ENCODE measurements at regions of chr11 and their contacts with region 1.

Region 1: GRCh38 chr11:131674051-131674755 is 303.8 kb downstream of the NTM start:
- DNase-seq: peak; percentile 62
- H3K4me3 ChIP-seq: no peak overlapping the region
- H3K27ac ChIP-seq: no peak overlapping the region
- H3K4me1 ChIP-seq: no peaks in the 10 kb centered on the region
- H3K27me3 ChIP-seq: peaks cover 0 to 4% of the 10 kb centered on the region in 2 experiments
- CTCF ChIP-seq: peak; percentile 94 to 96
- POLR2A ChIP-seq: no peak

Region 2: GRCh38 chr11:130916238-130916855 is 757.9 kb before region 1 on chr11 and contains the start of gene SNX19:
- CTCF ChIA-PET with region 1: interaction called, 16 read pairs
- POLR2A ChIA-PET with region 1: no interaction called
- dilution Hi-C with region 1: no loop called
- intact Hi-C with region 1: no loop called
- DNase-seq: peak; percentile 92
- H3K4me3 ChIP-seq: peak within 1 kb of the TSS; percentile 34 to 87 (median 51)
- H3K27ac ChIP-seq: peak within 1 kb of the TSS; percentile 76
- H3K4me1 ChIP-seq: peaks cover 12% of the 10 kb centered on the region
- H3K27me3 ChIP-seq: peaks cover 3 to 4% of the 10 kb centered on the region in 2 experiments
- CTCF ChIP-seq: peak; percentile 91 to 97
- POLR2A ChIP-seq: peak; percentile 89
- total RNA-seq, gene SNX19: 44.3 and 49.8 TPM in 2 replicates

Region 3: DNA sequence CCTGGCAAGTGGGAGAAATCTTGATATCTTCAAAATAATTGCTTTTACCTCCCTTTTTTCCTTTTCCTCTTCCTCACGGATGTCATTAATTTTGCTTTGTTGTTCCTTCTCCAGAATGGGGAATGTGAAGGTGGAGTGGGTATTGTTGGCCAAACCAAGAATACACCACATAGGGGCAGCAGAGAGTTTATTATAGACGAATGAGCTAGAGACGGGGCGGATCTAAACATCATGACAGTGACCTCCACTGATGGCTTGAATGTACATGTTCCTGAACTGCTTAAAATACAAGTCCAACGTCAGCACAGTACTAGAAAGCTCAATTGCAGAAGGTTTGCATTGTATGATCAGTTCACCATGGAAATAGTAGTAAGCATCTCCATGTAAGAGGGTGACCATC is 635.6 kb before region 1 on chr11:
- CTCF ChIA-PET with region 1: interaction called, 7 read pairs
- POLR2A ChIA-PET with region 1: no interaction called
- dilution Hi-C with region 1: no loop called
- intact Hi-C with region 1: loop called (anchors 10 kb)
- DNase-seq: no peak
- H3K4me3 ChIP-seq: no peak overlapping the region
- H3K27ac ChIP-seq: no peak overlapping the region
- H3K4me1 ChIP-seq: peaks cover 3% of the 10 kb centered on the region
- H3K27me3 ChIP-seq: peaks cover 0 to 1% of the 10 kb centered on the region in 2 experiments
- CTCF ChIP-seq: peak in 1 of 2 donors; percentile 9
- POLR2A ChIP-seq: no peak

Region 4: DNA sequence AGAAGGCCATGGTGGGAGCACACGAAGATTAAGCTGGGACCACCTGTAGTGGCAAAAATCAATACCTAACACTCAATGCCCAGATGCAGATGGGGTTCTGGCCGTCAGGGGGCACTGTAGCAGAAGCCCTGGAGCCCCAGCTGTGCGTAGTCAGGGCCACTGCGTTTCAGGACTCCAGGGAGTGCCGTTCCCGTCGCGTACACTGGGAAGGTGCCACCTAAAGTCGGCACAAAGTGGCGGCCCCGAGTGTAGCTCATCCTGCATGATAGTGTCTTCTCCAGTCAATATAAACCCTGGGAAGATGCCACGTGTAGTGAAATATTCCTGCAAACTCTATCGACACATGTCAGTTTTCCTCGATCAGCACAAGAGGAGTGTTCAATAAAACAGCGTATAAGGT is 427.5 kb before region 1 on chr11:
- CTCF ChIA-PET with region 1: no interaction called
- POLR2A ChIA-PET with region 1: no interaction called
- dilution Hi-C with region 1: no loop called
- intact Hi-C with region 1: loop called (anchors 5 kb)
- DNase-seq: no peak
- H3K4me3 ChIP-seq: no peak overlapping the region
- H3K27ac ChIP-seq: no peak overlapping the region
- H3K4me1 ChIP-seq: no peaks in the 10 kb centered on the region
- H3K27me3 ChIP-seq: no peaks in the 10 kb centered on the region
- CTCF ChIP-seq: no peak
- POLR2A ChIP-seq: no peak

Region 5: DNA sequence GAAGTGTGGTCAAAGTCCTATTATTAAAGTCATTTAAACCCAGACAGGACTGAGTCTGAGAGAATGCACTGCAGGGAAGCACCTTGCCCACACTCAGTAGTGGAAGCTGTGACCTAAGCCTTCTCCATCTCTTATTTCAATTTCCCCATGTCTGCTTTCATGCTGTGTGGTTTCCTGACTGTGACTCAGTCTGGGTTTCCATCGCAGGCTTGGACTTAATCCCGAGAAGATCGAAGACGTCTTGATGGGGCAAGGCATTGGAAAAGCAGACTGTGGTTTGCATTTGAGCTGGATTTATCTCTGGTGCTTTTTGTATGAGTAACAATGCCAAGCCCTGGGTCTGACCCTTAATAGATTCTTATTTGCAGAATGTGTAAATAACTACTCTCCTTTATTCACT is 64.9 kb before region 1 on chr11:
- CTCF ChIA-PET with region 1: no interaction called
- POLR2A ChIA-PET with region 1: no interaction called
- dilution Hi-C with region 1: no loop called
- intact Hi-C with region 1: no loop called
- DNase-seq: no peak
- H3K4me3 ChIP-seq: no peak overlapping the region
- H3K27ac ChIP-seq: no peak overlapping the region
- H3K4me1 ChIP-seq: no peaks in the 10 kb centered on the region
- H3K27me3 ChIP-seq: no peaks in the 10 kb centered on the region
- CTCF ChIP-seq: no peak
- POLR2A ChIP-seq: no peak

Region 6: GRCh38 chr11:131662317-131662972 is 11.8 kb before region 1 on chr11:
- CTCF ChIA-PET with region 1: interaction called, 19 read pairs
- POLR2A ChIA-PET with region 1: no interaction called
- dilution Hi-C with region 1: no loop called
- intact Hi-C with region 1: no loop called
- DNase-seq: no peak
- H3K4me3 ChIP-seq: no peak overlapping the region
- H3K27ac ChIP-seq: no peak overlapping the region
- H3K4me1 ChIP-seq: no peaks in the 10 kb centered on the region
- H3K27me3 ChIP-seq: peaks cover 2 to 3% of the 10 kb centered on the region in 2 experiments
- CTCF ChIP-seq: no peak
- POLR2A ChIP-seq: no peak

Region 7: GRCh38 chr11:131710511-131710910 is 36.3 kb after region 1 on chr11:
- CTCF ChIA-PET with region 1: no interaction called
- POLR2A ChIA-PET with region 1: no interaction called
- dilution Hi-C with region 1: no loop called
- intact Hi-C with region 1: no loop called
- DNase-seq: no peak
- H3K4me3 ChIP-seq: no peak overlapping the region
- H3K27ac ChIP-seq: no peak overlapping the region
- H3K4me1 ChIP-seq: peaks cover 12% of the 10 kb centered on the region
- H3K27me3 ChIP-seq: no peaks in the 10 kb centered on the region
- CTCF ChIP-seq: no peak
- POLR2A ChIP-seq: no peak